Endothelial cell of umbilical vein (primary cell): ENCODE measurements at regions of chr12 and their contacts with region 1.

Region 1: GRCh38 chr12:98516184-98516873 is 939 bp downstream of the TMPO start:
- DNase-seq: peak; percentile 78
- H3K4me3 ChIP-seq: peak overlapping the region; percentile 60 to 99 (median 97)
- H3K27ac ChIP-seq: peak overlapping the region; percentile 85
- H3K4me1 ChIP-seq: peaks cover 16% of the 10 kb centered on the region
- H3K27me3 ChIP-seq: no peaks in the 10 kb centered on the region
- CTCF ChIP-seq: peak; percentile 58 to 61
- POLR2A ChIP-seq: no peak

Region 2: GRCh38 chr12:98126637-98127335 is 389.5 kb before region 1 on chr12:
- CTCF ChIA-PET with region 1: no interaction called
- POLR2A ChIA-PET with region 1: no interaction called
- dilution Hi-C with region 1: no loop called
- intact Hi-C with region 1: loop called (anchors 5 kb)
- DNase-seq: peak; percentile 82
- H3K4me3 ChIP-seq: peak overlapping the region in 1 of 3 experiments; percentile 30
- H3K27ac ChIP-seq: peak overlapping the region; percentile 95
- H3K4me1 ChIP-seq: peaks cover 22% of the 10 kb centered on the region
- H3K27me3 ChIP-seq: no peaks in the 10 kb centered on the region
- CTCF ChIP-seq: no peak
- POLR2A ChIP-seq: no peak

Region 3: GRCh38 chr12:98424726-98425401 is 91.5 kb before region 1 on chr12:
- CTCF ChIA-PET with region 1: interaction called, 36 read pairs
- POLR2A ChIA-PET with region 1: no interaction called
- dilution Hi-C with region 1: no loop called
- intact Hi-C with region 1: loop called (anchors 1 kb)
- DNase-seq: peak; percentile 94
- H3K4me3 ChIP-seq: peak overlapping the region in 1 of 3 experiments; percentile 14
- H3K27ac ChIP-seq: peak overlapping the region; percentile 54
- H3K4me1 ChIP-seq: peaks cover 15% of the 10 kb centered on the region
- H3K27me3 ChIP-seq: no peaks in the 10 kb centered on the region
- CTCF ChIP-seq: peak; percentile 65 to 68
- POLR2A ChIP-seq: no peak

Region 4: DNA sequence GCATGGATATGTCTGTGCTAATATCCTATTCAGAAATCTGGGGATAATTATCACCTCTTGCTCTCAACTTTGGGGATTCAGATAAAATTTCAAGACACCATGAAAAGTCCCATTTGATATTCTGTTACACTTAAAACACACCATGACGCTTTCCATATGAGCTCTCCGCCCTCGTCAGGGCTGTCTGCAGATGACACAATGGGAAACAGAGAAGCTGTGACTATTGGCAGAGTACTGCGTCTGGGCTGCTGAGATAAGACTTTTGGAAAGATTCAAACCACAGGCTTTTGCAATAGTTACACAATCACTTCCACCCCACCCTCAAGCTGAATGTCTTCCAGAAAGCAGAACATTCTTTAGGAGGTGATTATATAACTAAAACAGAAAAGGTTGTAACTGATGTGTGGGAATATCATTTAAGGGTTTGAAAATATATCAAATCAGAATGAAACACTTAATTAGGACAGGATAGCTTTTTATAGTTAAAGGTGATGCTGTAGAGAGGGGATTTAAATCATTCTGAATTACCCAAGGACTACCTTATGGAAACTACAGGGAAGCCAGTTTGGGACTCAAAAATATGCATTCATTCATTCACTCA is 76.2 kb before region 1 on chr12:
- CTCF ChIA-PET with region 1: interaction called, 4 read pairs
- POLR2A ChIA-PET with region 1: no interaction called
- dilution Hi-C with region 1: no loop called
- intact Hi-C with region 1: loop called (anchors 1 kb)
- DNase-seq: peak; percentile 95
- H3K4me3 ChIP-seq: peak overlapping the region in 1 of 3 experiments; percentile 21
- H3K27ac ChIP-seq: peak overlapping the region; percentile 88
- H3K4me1 ChIP-seq: peaks cover 18% of the 10 kb centered on the region
- H3K27me3 ChIP-seq: no peaks in the 10 kb centered on the region
- CTCF ChIP-seq: no peak
- POLR2A ChIP-seq: no peak

Region 5: GRCh38 chr12:98503592-98504367 is 12.5 kb before region 1 on chr12:
- CTCF ChIA-PET with region 1: interaction called, 8 read pairs
- POLR2A ChIA-PET with region 1: interaction called, 3 read pairs
- dilution Hi-C with region 1: no loop called
- intact Hi-C with region 1: loop called (anchors 1 kb)
- DNase-seq: peak; percentile 95
- H3K4me3 ChIP-seq: peak overlapping the region in 2 of 3 experiments; percentile 50 to 83
- H3K27ac ChIP-seq: peak overlapping the region; percentile 93
- H3K4me1 ChIP-seq: peaks cover 2% of the 10 kb centered on the region
- H3K27me3 ChIP-seq: no peaks in the 10 kb centered on the region
- CTCF ChIP-seq: no peak
- POLR2A ChIP-seq: peak; percentile 45

Region 6: DNA sequence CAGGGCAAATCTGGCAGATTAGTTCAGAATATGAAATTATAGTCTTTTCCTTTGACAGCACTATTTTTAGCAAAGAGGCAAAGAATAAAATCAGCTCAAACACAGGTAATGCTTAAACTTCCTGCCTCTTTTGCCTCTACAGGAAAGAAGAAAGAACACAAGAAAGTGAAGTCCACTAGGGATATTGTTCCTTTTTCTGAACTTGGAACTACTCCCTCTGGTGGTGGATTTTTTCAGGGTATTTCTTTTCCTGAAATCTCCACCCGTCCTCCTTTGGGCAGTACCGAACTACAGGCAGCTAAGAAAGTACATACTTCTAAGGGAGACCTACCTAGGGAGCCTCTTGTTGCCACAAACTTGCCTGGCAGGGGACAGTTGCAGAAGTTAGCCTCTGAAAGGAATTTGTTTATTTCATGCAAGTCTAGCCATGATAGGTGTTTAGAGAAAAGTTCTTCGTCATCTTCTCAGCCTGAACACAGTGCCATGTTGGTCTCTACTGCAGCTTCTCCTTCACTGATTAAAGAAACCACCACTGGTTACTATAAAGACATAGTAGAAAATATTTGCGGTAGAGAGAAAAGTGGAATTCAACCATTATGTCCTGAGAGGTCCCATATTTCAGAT is 16.5 kb after region 1 on chr12:
- CTCF ChIA-PET with region 1: interaction called, 23 read pairs
- POLR2A ChIA-PET with region 1: no interaction called
- dilution Hi-C with region 1: no loop called
- intact Hi-C with region 1: no loop called
- DNase-seq: peak; percentile 51
- H3K4me3 ChIP-seq: no peak overlapping the region
- H3K27ac ChIP-seq: no peak overlapping the region
- H3K4me1 ChIP-seq: no peaks in the 10 kb centered on the region
- H3K27me3 ChIP-seq: no peaks in the 10 kb centered on the region
- CTCF ChIP-seq: peak; percentile 42 to 43
- POLR2A ChIP-seq: no peak

Region 7: GRCh38 chr12:98644711-98645402 is 128.5 kb after region 1 on chr12 and contains the starts of genes APAF1 and IKBIP:
- CTCF ChIA-PET with region 1: no interaction called
- POLR2A ChIA-PET with region 1: interaction called, 6 read pairs
- dilution Hi-C with region 1: no loop called
- intact Hi-C with region 1: loop called (anchors 1 kb)
- DNase-seq: peak; percentile 97
- H3K4me3 ChIP-seq: peak within 1 kb of the TSS; percentile 67 to 92 (median 87)
- H3K27ac ChIP-seq: peak within 1 kb of the TSS; percentile 67
- H3K4me1 ChIP-seq: peaks cover 11% of the 10 kb centered on the region
- H3K27me3 ChIP-seq: no peaks in the 10 kb centered on the region
- CTCF ChIP-seq: no peak
- POLR2A ChIP-seq: peak; percentile 65
- total RNA-seq, gene APAF1: 32.1 and 35.2 TPM in 2 replicates
- total RNA-seq, gene IKBIP: 56.2 and 56.8 TPM in 2 replicates